Activated CD4-positive, alpha-beta T cell treated with anti-CD3 and anti-CD28 coated beads, Interleukin-2, amount 10 ng/mL, durations not matched to agents 7 days and 5 days (primary cell): ENCODE measurements at regions of chr18 and their contacts with region 1.

Region 1: DNA sequence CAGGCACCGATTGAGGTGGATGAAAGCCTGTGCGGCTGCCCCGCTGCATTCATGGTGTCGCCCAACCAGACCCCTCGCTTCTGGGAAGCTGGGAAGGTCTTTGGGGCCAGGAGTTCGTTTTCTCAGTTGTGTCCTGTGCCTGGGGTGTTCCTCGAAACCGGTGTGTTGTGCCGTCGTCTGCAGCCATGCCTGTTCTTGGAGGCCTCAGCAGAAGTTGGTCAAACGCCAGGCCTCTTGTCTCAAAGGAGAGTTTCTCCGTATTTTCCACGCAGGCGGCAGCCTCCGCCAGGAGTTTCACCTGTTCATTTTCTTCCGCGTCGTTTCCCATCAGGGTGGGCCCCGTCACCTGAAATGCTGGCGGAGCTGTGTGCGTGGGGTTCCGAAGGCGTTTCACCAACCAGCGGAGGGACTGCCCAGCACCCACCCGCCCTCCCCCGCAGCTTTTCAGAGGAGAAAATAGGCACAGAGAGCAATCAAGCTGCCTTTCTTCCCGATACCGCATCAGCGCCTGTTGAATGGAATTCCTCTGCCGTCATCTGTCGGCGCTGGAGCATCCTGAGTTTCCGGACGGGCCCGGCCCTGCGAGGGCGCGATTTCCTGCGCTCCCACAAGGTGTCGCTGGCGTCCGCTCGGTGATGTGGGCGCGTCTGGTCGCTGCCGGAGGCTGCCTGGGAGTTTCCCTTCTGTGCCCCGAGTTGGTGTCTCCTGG is 17.0 kb upstream of the NFATC1 start:
- DNase-seq: peak; percentile 79
- H3K4me3 Mint-ChIP-seq: no peak overlapping the region
- H3K27ac Mint-ChIP-seq: no peak overlapping the region
- H3K4me1 Mint-ChIP-seq: peaks cover 7% of the 10 kb centered on the region
- H3K27me3 Mint-ChIP-seq: no peaks in the 10 kb centered on the region

Region 2: GRCh38 chr18:79392226-79392625 is 13.5 kb after region 1 on chr18:
- CTCF ChIA-PET with region 1: interaction called, 21 read pairs
- POLR2A ChIA-PET with region 1: no interaction called
- DNase-seq: no peak
- H3K4me3 Mint-ChIP-seq: no peak overlapping the region
- H3K27ac Mint-ChIP-seq: no peak overlapping the region
- H3K4me1 Mint-ChIP-seq: peaks cover 22% of the 10 kb centered on the region
- H3K27me3 Mint-ChIP-seq: peaks cover 40% of the 10 kb centered on the region

Region 3: DNA sequence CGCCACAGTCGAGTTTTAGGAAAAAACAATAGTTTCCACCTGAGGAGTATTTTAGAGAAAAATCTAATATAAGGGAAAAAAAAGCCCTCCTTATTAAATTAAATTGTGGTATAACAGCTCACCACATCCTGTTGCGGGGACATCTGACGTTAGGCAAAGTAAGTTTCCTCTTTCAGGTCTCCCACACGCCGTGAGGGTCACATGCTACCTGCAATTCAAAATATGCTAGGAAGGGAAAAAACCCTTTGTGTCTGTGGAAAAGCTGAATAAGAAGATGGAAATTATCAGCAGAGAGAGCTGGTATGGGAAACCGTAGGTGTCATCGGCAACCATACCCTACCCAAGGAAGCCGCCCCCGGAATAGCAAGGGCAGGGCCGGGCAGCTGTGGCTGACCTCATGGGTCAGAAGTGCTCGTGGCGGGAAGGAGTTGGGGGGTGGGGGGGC is 145.1 kb after region 1 on chr18:
- CTCF ChIA-PET with region 1: interaction called, 41 read pairs
- POLR2A ChIA-PET with region 1: no interaction called
- DNase-seq: peak; percentile 83
- H3K4me3 Mint-ChIP-seq: peak overlapping the region; percentile 66
- H3K27ac Mint-ChIP-seq: peak overlapping the region; percentile 94
- H3K4me1 Mint-ChIP-seq: peaks cover 69% of the 10 kb centered on the region
- H3K27me3 Mint-ChIP-seq: no peaks in the 10 kb centered on the region

Region 4: DNA sequence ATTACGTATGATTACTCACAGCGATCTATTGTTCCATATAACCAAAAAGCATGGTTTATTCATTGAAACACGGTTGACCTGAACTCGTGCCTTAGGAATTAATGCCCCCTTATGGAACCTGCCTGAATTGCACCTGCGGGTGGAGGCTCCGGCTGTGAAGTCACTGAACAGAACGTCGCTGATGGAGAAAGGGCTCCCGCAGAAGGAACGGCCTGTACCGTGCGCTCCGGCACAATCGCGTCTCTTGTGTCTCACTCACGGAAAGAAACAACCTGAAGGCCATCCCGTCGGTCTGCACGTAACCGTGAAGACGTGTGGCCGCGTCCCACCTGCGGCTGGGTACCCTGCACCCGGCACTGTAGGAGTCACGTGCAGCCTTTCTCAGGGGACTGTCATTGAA is 150.2 kb after region 1 on chr18:
- CTCF ChIA-PET with region 1: interaction called, 41 read pairs
- POLR2A ChIA-PET with region 1: no interaction called
- DNase-seq: peak; percentile 82
- H3K4me3 Mint-ChIP-seq: no peak overlapping the region
- H3K27ac Mint-ChIP-seq: no peak overlapping the region
- H3K4me1 Mint-ChIP-seq: peaks cover 24% of the 10 kb centered on the region
- H3K27me3 Mint-ChIP-seq: no peaks in the 10 kb centered on the region

Region 5: DNA sequence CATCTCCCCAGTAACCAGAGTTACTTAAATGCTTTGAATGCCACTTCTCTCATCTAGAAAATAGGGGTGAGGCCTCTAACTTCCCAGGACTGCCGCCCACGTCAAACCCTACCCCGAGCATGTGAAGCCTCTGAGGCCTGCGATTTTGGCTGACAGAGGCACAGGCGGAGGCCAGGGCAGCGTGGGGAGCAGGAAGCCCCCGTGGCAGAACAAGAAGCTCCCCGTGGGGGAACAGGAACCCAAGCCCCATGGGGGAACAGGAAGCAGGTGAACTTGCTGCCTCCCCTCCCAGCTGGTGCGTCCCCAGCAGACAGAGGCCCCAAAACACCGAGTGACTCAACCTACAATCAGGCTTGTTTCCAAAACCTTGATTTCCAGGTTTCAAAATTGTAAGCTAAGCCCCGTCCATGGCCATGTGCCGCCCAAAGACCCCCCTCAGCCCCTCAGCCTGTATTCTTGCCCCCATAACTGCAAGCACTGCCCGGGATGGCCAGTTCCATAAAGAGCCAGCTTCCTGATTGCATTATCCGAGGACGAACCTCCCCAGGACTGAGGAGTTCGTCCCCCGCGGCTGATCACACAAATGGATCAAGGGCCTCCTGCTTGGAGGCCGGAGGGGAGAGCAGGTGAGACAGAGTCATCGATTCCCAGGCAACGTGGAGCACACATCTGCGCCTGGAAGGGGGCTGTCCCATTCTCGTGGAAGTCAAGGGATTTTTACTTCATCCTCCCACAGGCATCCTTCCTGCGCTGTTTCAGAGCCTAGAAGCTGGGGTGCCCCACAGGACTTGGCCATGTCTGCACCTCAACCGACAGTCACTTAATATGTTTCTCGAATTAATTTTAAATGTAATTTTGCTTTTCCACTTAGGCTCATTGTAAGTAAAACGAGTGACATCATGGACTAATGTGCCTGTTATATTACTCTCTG is 264.6 kb after region 1 on chr18:
- CTCF ChIA-PET with region 1: interaction called, 10 read pairs
- POLR2A ChIA-PET with region 1: no interaction called
- DNase-seq: no peak
- H3K4me3 Mint-ChIP-seq: no peak overlapping the region
- H3K27ac Mint-ChIP-seq: no peak overlapping the region
- H3K4me1 Mint-ChIP-seq: peaks cover 5% of the 10 kb centered on the region
- H3K27me3 Mint-ChIP-seq: no peaks in the 10 kb centered on the region